Common myeloid progenitor, CD34-positive (primary cell): ENCODE measurements at regions of chr19 and their contacts with region 1.

Region 1: GRCh38 chr19:17246681-17247425 is 1.1 kb upstream of the NR2F6 start:
- DNase-seq: no peak
- H3K4me3 ChIP-seq: peak overlapping the region; percentile 40 to 79 (median 65)
- H3K27ac ChIP-seq: peak overlapping the region in 1 of 2 experiments; percentile 70
- H3K4me1 ChIP-seq: peaks cover 0 to 25% (median 24%) of the 10 kb centered on the region in 4 experiments
- H3K27me3 ChIP-seq: no peaks in the 10 kb centered on the region

Region 2: GRCh38 chr19:17205237-17206140 is 41.4 kb before region 1 on chr19:
- CTCF ChIA-PET with region 1: no interaction called
- POLR2A ChIA-PET with region 1: no interaction called
- DNase-seq: peak; percentile 50 to 69 (median 67)
- H3K4me3 ChIP-seq: no peak overlapping the region
- H3K27ac ChIP-seq: no peak overlapping the region
- H3K4me1 ChIP-seq: no peaks in the 10 kb centered on the region
- H3K27me3 ChIP-seq: no peaks in the 10 kb centered on the region

Region 3: DNA sequence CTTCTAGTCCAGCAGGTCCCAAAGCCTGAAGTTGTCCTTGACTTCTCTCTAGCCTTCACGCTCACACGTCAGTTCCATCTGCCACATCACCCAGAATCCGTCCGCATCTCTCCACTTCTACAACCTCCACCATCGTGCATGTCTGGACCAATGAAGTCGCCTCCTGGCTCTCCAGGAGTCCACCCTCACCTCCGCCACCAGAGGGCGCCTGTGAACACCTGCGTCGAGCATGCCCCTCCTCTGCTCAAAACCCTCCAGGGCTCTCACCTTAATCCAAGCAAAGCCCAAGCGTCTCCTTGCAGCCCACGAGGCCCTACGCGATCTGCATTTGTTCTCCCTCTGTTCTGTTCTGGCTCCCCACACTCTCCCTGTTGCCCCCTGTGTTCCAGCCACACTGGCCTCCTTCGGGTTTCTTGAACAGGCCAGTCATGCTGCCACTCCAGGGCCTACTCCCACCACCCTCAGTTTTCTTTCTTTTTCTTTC is 14.0 kb after region 1 on chr19:
- CTCF ChIA-PET with region 1: interaction called, 15 read pairs
- POLR2A ChIA-PET with region 1: interaction called, 3 read pairs
- DNase-seq: peak; percentile 82 to 92 (median 90)
- H3K4me3 ChIP-seq: no peak overlapping the region
- H3K27ac ChIP-seq: no peak overlapping the region
- H3K4me1 ChIP-seq: peaks cover 0 to 11% (median 6%) of the 10 kb centered on the region in 4 experiments
- H3K27me3 ChIP-seq: no peaks in the 10 kb centered on the region